ENCODE measurements at regions of chr6 and their contacts with region 1.

Region 1: GRCh38 chr6:110537208-110538123 is 61.1 kb upstream of the SLC22A16 start:
- DNase-seq: no peak
- ATAC-seq: peak in 3 of 4 donors; percentile 46 to 69 (median 68)
- H3K4me3 ChIP-seq: no peak overlapping the region
- H3K27ac ChIP-seq: peak overlapping the region in 8 of 12 donors; percentile 1 to 60 (median 38)
- H3K4me1 ChIP-seq: peaks cover 0 to 14% (median 3%) of the 10 kb centered on the region in 12 donors
- H3K27me3 ChIP-seq: no peaks in the 10 kb centered on the region
- CTCF ChIP-seq: no peak
- POLR2A ChIP-seq: no peak

Region 2: DNA sequence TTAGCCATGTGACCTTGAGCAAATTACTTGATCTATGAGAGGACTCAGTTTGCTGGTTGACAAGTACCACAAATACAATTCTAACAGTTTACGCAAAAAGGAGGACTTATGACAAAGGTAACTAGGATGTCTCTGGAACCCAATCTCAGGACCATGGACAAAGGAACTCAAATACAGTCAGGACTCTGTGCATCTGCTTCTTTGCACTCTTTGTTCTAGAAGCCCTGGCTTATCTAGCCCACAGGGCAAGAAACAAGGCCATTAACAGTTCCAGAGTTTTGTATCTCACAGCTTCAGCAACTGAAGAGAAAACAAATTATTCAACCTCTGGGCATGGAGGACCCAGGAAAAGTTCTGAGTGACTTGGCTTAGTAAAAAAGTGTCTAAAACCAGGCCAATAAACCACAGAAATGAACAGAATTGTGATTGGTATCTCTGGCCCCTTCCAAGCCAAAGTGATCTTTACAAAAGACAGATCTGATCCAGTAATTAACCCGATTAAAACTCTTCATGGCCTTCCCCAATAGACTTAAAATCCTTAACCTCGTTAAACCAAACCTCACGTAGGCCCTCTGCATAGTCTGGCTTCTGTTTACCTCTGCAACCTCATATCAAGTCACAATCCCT is 363.8 kb before region 1 on chr6:
- intact Hi-C with region 1: no loop called
- DNase-seq: no peak
- ATAC-seq: no peak
- H3K4me3 ChIP-seq: no peak overlapping the region
- H3K27ac ChIP-seq: no peak overlapping the region
- H3K4me1 ChIP-seq: peaks cover 0 to 6% (median 2%) of the 10 kb centered on the region in 12 donors
- H3K27me3 ChIP-seq: no peaks in the 10 kb centered on the region
- CTCF ChIP-seq: no peak
- POLR2A ChIP-seq: no peak

Region 3: DNA sequence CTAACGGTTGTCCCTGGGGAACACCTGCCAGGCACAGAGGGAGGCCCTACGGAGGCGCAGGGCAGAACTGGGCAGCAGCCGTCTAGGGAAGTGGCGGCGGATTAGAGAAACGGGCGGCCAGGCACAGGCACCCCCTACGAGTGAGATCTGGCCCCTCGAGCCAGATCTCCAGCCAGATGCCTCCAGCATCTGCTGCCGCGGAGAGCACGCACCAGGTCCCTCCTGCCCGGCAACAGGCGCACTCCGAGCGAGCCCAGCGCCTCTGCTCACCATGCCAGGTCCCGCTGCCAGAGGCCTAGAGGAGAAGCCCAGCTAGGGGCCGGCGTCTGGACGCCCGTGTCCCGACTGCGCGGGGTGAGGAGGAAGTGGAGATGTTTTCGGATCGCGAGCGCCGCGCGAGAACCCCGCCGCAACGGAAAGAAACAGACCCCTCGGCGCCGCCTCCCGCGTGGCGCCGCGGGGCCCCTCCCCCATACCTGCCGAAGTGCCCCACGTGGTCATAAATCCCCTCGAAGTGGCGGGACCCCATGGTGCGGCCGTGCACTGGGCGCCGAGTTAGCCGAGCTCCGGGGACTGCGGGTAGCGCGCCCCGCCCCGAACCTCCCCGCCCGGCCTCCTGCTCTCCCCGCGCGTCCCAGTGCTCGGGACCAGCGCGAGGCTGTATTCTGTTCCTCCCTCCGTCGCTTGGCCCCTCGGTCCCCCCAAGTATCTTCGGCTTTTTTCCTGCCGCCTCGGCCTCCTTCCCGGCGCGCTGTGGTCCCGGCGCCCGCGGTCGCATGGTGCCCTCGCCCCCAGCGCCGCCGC is 61.2 kb before region 1 on chr6 and contains the start of gene SLC22A16:
- intact Hi-C with region 1: no loop called
- DNase-seq: peak in 3 of 5 donors; percentile 26 to 76 (median 31)
- ATAC-seq: peak in 3 of 4 donors; percentile 22 to 55 (median 48)
- H3K4me3 ChIP-seq: peak within 1 kb of the TSS in 11 of 12 donors; percentile 16 to 63 (median 38)
- H3K27ac ChIP-seq: peak within 1 kb of the TSS in 1 of 12 donors; percentile 85
- H3K4me1 ChIP-seq: peaks cover 0 to 8% (median 0%) of the 10 kb centered on the region in 12 donors
- H3K27me3 ChIP-seq: peaks cover 0 to 44% (median 14%) of the 10 kb centered on the region in 9 donors
- CTCF ChIP-seq: no peak
- POLR2A ChIP-seq: no peak
- total RNA-seq, gene SLC22A16: 0.42 to 2.4 (median 2.2) TPM in 3 of 9 donors, not detected in the others

Region 4: DNA sequence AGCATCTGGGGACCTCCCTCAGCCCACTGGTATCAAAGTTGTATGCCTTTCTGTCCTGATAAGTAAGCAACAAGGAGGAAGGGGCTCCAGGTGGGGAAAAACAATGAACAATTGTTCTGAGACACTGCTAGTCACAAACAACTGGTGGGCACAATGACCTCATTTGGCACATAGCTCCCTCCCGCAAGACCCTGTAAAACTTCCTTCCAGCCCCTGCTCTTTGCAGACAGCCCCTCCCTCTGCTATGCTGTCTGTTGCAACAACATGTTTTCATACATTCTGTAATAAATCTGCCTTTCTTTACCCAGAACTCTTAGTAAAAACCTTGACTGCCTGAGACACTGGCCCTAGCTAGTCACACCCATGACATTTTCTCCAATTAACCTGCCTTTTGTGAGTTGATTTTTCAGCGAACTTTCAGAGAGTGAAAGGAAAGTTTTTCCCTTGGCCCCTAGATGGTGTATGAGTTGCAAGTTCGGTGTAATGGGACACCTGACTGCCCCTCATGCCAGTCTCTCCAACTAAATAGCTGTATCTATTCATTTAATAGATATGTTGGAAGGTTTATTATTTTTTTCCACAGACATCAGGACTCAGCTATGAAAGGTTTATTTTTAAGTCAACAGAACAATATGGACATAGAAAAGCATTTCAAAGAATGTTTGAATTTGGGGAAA is 81.3 kb after region 1 on chr6:
- intact Hi-C with region 1: loop called in 1 of 10 experiments (anchors 10 kb)
- DNase-seq: no peak
- ATAC-seq: peak in 3 of 4 donors; percentile 47 to 60 (median 55)
- H3K4me3 ChIP-seq: no peak overlapping the region
- H3K27ac ChIP-seq: peak overlapping the region in 5 of 12 donors; percentile 7 to 33 (median 15)
- H3K4me1 ChIP-seq: peaks cover 0 to 31% (median 12%) of the 10 kb centered on the region in 12 donors
- H3K27me3 ChIP-seq: no peaks in the 10 kb centered on the region
- CTCF ChIP-seq: peak in 8 of 12 donors; percentile 15 to 44 (median 27)
- POLR2A ChIP-seq: no peak

Region 5: DNA sequence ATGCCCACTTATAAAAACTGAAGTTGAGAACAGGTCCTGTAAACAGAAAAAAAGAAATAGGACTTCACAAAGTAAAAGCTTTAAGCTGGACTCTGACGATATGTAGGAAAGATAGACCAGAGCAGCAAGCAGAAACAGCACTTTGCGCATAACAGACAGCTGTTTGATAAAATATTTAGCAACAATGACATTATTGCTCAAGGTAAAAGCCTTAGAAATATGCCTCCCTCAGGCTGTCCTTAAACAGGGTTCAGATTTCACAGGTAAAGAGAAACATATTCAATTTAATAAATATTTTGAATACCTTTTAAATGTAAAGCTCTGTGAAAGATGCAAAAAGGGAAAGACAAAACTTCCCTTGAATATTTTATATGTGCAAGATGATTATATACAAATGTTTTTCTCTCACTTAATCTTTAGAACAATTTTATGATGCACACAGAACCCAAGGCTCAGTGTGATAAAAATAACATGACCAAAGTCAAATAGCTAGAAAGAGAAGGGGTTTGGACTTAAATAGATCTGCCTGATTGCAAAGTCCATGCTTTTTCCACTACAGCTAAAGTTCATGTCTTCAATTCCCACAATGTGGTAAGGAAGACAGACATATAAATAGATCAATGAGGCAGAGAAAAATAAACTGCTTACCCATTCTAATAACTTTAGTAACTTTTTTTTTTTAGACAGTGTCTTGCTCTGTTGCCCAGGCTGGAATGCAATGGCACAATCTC is 133.8 kb after region 1 on chr6:
- intact Hi-C with region 1: loop called in 2 of 10 experiments (anchors 5 to 10 kb)
- DNase-seq: no peak
- ATAC-seq: no peak
- H3K4me3 ChIP-seq: no peak overlapping the region
- H3K27ac ChIP-seq: no peak overlapping the region
- H3K4me1 ChIP-seq: peaks cover 0 to 12% (median 0%) of the 10 kb centered on the region in 12 donors
- H3K27me3 ChIP-seq: no peaks in the 10 kb centered on the region
- CTCF ChIP-seq: no peak
- POLR2A ChIP-seq: no peak

Region 6: GRCh38 chr6:110676396-110676795 is 138.9 kb after region 1 on chr6:
- intact Hi-C with region 1: loop called in 4 of 10 experiments (anchors 5 to 10 kb)
- DNase-seq: no peak
- ATAC-seq: no peak
- H3K4me3 ChIP-seq: no peak overlapping the region
- H3K27ac ChIP-seq: no peak overlapping the region
- H3K4me1 ChIP-seq: peaks cover 0 to 10% (median 1%) of the 10 kb centered on the region in 12 donors
- H3K27me3 ChIP-seq: no peaks in the 10 kb centered on the region
- CTCF ChIP-seq: no peak
- POLR2A ChIP-seq: no peak

Region 7: DNA sequence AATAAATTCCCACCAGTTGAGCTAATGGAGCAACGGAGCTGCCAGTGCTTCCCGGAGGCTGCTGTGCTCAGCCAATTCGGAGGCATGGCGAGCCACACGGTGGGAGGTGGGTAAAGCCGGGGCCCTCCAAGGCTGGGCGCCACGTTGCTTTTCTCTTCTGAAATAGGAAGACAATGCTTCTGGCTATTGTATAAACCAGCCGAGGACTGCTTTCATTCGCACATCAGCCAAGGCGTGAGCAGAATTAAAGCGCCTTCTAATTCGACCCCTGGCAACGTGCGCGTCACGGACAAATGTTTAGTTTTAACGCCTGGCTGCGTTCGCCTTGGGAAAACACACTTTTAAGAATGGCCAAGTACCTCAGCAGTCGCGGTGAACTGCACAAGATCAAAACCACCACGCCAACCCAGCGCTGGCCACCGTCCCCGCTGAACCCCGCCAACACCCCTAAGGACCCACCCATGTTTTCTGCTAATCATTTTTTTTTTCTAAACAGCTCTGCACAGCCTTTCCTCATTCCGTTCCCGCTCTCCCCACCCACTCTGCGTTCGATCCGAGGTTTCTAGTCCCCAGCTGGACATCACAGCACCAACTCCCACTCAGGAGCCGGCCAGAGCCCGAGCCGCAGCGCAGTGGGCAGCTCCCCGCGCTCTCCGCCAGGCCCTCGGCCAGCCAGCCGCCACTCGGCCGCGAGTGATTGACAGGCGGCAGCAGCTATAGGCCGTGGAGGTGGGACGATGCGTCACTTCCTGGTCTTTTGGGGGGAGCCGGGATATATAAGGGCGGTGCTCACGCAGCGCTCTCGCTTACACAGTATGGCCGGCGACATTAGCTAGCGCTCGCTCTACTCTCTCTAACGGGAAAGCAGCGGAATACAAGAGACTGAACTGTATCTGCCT is 336.8 kb after region 1 on chr6 and contains the start of gene AMD1:
- intact Hi-C with region 1: loop called in 2 of 10 experiments (anchors 5 kb)
- DNase-seq: peak; percentile 98 to 99 (median 98)
- ATAC-seq: peak; percentile 92 to 95 (median 94)
- H3K4me3 ChIP-seq: peak within 1 kb of the TSS; percentile 74 to 95 (median 90)
- H3K27ac ChIP-seq: peak within 1 kb of the TSS; percentile 74 to 98 (median 94)
- H3K4me1 ChIP-seq: peaks cover 2 to 36% (median 29%) of the 10 kb centered on the region in 12 donors
- H3K27me3 ChIP-seq: no peaks in the 10 kb centered on the region
- CTCF ChIP-seq: no peak
- POLR2A ChIP-seq: peak; percentile 93 to 98
- total RNA-seq, gene AMD1: 44.5 to 85.6 (median 70.4) TPM

Region 8: GRCh38 chr6:110999634-111000270 is 462.3 kb after region 1 on chr6:
- intact Hi-C with region 1: loop called in 1 of 10 experiments (anchors 5 kb)
- DNase-seq: no peak
- ATAC-seq: no peak
- H3K4me3 ChIP-seq: no peak overlapping the region
- H3K27ac ChIP-seq: no peak overlapping the region
- H3K4me1 ChIP-seq: no peaks in the 10 kb centered on the region
- H3K27me3 ChIP-seq: no peaks in the 10 kb centered on the region
- CTCF ChIP-seq: peak in 11 of 12 donors; percentile 15 to 58 (median 45)
- POLR2A ChIP-seq: no peak

Measured in heart left ventricle (tissue), 16 donors.